ENCODE measurements at regions of chr6 and their contacts with region 1.

Region 1: GRCh38 chr6:27472617-27473400 is at the start of gene ZNF184:
- DNase-seq: peak; percentile 88 to 93
- ATAC-seq: peak; percentile 97 to 99
- H3K4me3 ChIP-seq: peak within 1 kb of the TSS; percentile 62 to 98 (median 85)
- H3K27ac ChIP-seq: peak within 1 kb of the TSS; percentile 87 to 97 (median 95)
- H3K4me1 ChIP-seq: peaks cover 13 to 20% of the 10 kb centered on the region in 2 donors
- H3K27me3 ChIP-seq: no peaks in the 10 kb centered on the region
- CTCF ChIP-seq: peak in 1 of 5 experiments; percentile 4
- POLR2A ChIP-seq: peak; percentile 77
- total RNA-seq, gene ZNF184: 3.9 to 6.0 (median 4.4) TPM

Region 2: GRCh38 chr6:26025894-26026832 is 1446.6 kb before region 1 on chr6:
- in situ Hi-C with region 1: no loop called
- intact Hi-C with region 1: loop called (anchors 10 kb)
- DNase-seq: peak; percentile 86 to 87
- ATAC-seq: peak; percentile 60 to 72
- H3K4me3 ChIP-seq: peak overlapping the region; percentile 46 to 65 (median 62)
- H3K27ac ChIP-seq: peak overlapping the region; percentile 80 to 88 (median 83)
- H3K4me1 ChIP-seq: peaks cover 0 to 15% of the 10 kb centered on the region in 2 donors
- H3K27me3 ChIP-seq: peaks cover 7 to 67% (median 13%) of the 10 kb centered on the region in 3 donors
- CTCF ChIP-seq: peak; percentile 50 to 75 (median 73)
- POLR2A ChIP-seq: peak; percentile 7

Region 3: GRCh38 chr6:26319405-26320128 is 1153.2 kb before region 1 on chr6:
- in situ Hi-C with region 1: no loop called
- intact Hi-C with region 1: loop called (anchors 5 kb)
- DNase-seq: no peak
- ATAC-seq: no peak
- H3K4me3 ChIP-seq: no peak overlapping the region
- H3K27ac ChIP-seq: no peak overlapping the region
- H3K4me1 ChIP-seq: peaks cover 0 to 9% of the 10 kb centered on the region in 2 donors
- H3K27me3 ChIP-seq: peaks cover 2 to 25% (median 17%) of the 10 kb centered on the region in 3 donors
- CTCF ChIP-seq: no peak
- POLR2A ChIP-seq: no peak

Region 4: GRCh38 chr6:26659042-26659999 is 813.5 kb before region 1 on chr6 and contains the start of gene ZNF322:
- in situ Hi-C with region 1: loop called in 1 of 4 experiments (anchors 25 kb)
- intact Hi-C with region 1: no loop called
- DNase-seq: peak; percentile 90 to 92
- ATAC-seq: peak; percentile 98 to 99
- H3K4me3 ChIP-seq: peak within 1 kb of the TSS; percentile 71 to 92 (median 84)
- H3K27ac ChIP-seq: peak within 1 kb of the TSS; percentile 83 to 93 (median 86)
- H3K4me1 ChIP-seq: peaks cover 14 to 19% of the 10 kb centered on the region in 2 donors
- H3K27me3 ChIP-seq: no peaks in the 10 kb centered on the region
- CTCF ChIP-seq: peak in 2 of 5 experiments; percentile 25 to 35
- POLR2A ChIP-seq: peak; percentile 69 to 70
- total RNA-seq, gene ZNF322: 5.1 to 10.8 (median 8.7) TPM

Region 5: DNA sequence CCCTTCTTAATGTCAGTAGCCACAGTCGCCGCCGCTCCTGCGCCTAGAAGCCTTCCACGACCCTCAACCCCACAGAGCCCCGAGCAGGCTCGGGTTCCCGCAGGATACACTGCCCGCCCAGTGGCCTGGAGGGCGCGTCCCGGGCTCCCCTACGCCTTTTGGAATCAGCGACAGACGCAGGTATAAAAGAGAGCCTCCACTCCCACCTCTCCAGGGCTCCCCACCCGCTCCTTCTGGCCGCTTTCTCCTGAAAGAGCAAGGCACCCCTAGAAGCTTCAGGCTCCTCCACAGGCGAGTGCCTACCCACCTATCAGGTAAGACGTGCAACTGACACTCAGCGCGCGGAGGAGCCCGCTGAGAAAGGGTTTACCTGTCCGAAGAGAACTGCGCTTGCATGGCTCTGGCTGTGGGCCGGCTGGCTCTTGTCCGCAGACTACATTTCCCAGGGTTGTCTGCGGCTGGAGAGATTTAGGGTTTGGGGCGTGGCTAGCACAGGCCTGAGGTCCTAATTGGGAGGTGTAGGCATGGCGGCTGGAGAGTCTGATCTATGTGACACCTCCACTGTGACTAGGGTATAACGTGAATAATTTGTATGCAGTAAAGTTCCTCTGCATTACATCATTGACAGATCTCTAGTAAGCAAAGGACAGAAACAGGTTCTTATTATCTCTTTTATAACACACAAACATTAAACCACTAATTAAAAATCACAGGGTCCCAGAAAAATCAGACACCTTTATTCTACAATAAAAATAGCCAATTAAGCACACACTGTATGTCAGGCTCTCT is 97.8 kb before region 1 on chr6:
- in situ Hi-C with region 1: no loop called
- intact Hi-C with region 1: loop called (anchors 5 kb)
- DNase-seq: peak; percentile 59 to 74
- ATAC-seq: peak; percentile 98 to 99
- H3K4me3 ChIP-seq: peak overlapping the region; percentile 64 to 79 (median 74)
- H3K27ac ChIP-seq: peak overlapping the region; percentile 41 to 57 (median 45)
- H3K4me1 ChIP-seq: peaks cover 6 to 13% of the 10 kb centered on the region in 2 donors
- H3K27me3 ChIP-seq: no peaks in the 10 kb centered on the region
- CTCF ChIP-seq: no peak
- POLR2A ChIP-seq: no peak

Region 6: DNA sequence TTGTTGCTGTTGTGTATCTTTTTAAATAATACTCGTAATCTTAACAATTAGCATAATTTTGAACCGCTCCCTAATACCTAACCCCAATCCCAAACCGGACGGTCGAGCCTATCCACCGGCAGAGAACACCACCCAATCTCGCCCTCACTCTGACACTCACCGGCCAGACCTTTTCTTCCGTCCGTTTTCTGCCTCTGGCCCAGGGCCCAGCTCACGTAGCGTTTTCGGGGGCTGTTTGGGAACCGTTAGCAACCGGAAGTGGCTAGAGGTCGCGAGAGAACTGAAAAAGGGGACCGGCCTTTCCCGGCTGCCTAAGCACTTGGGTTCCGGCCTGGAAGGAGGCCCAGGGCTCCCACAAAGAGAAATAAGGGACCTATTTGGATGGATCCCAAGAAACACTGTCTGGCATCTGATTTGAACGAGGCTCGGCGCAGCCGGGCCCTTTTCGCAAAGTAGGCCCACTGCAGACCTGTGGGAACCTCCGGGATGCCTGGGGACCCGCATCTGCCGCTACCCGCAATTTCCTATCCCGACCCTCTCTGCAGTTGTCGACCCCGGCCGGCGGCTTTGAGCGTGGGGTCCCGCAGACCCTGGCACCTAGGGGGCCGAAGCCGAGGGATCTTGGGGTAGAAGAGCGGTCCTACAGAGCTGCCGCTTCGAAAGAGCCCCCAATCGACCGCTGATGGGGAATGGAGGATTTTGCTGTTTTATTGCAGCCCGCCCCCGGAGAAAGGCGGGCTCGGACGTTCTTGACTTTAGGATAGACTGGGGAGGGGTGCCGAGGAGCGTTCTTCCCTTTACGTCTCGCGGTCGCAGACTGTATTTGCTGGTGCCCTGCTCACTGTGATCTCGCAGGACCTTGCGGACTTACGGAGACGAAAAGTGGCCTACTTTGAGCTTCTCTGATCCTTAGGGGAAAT is 664.0 kb after region 1 on chr6:
- in situ Hi-C with region 1: no loop called
- intact Hi-C with region 1: loop called (anchors 5 kb)
- DNase-seq: peak; percentile 78 to 91
- ATAC-seq: peak; percentile 90 to 93
- H3K4me3 ChIP-seq: peak overlapping the region; percentile 81 to 99 (median 98)
- H3K27ac ChIP-seq: peak overlapping the region; percentile 90 to 97 (median 92)
- H3K4me1 ChIP-seq: peaks cover 17 to 21% of the 10 kb centered on the region in 2 donors
- H3K27me3 ChIP-seq: no peaks in the 10 kb centered on the region
- CTCF ChIP-seq: no peak
- POLR2A ChIP-seq: peak in 1 of 2 donors; percentile 31

Region 7: GRCh38 chr6:28981833-28982475 is 1509.1 kb after region 1 on chr6:
- in situ Hi-C with region 1: no loop called
- intact Hi-C with region 1: loop called (anchors 5 kb)
- DNase-seq: peak; percentile 44 to 74
- ATAC-seq: peak; percentile 80 to 84
- H3K4me3 ChIP-seq: peak overlapping the region; percentile 60 to 70 (median 62)
- H3K27ac ChIP-seq: peak overlapping the region; percentile 57 to 77 (median 66)
- H3K4me1 ChIP-seq: peaks cover 0 to 3% of the 10 kb centered on the region in 2 donors
- H3K27me3 ChIP-seq: peaks cover 3 to 10% (median 9%) of the 10 kb centered on the region in 3 donors
- CTCF ChIP-seq: no peak
- POLR2A ChIP-seq: no peak